ENCODE measurements at regions of chr12 and their contacts with region 1.

Region 1: GRCh38 chr12:126874427-126875026 is 1392.4 kb upstream of the TMEM132C start:
- DNase-seq: peak; percentile 8 to 72 (median 53)
- ATAC-seq: no peak
- H3K4me3 ChIP-seq: no peak overlapping the region
- H3K4me3 Mint-ChIP-seq: no peak overlapping the region
- H3K27ac ChIP-seq: no peak overlapping the region
- H3K27ac Mint-ChIP-seq: no peak overlapping the region
- H3K4me1 ChIP-seq: no peaks in the 10 kb centered on the region
- H3K4me1 Mint-ChIP-seq: no peaks in the 10 kb centered on the region
- H3K27me3 ChIP-seq: no peaks in the 10 kb centered on the region
- H3K27me3 Mint-ChIP-seq: peaks cover 2% of the 10 kb centered on the region
- CTCF ChIP-seq: peak; percentile 57

Region 2: DNA sequence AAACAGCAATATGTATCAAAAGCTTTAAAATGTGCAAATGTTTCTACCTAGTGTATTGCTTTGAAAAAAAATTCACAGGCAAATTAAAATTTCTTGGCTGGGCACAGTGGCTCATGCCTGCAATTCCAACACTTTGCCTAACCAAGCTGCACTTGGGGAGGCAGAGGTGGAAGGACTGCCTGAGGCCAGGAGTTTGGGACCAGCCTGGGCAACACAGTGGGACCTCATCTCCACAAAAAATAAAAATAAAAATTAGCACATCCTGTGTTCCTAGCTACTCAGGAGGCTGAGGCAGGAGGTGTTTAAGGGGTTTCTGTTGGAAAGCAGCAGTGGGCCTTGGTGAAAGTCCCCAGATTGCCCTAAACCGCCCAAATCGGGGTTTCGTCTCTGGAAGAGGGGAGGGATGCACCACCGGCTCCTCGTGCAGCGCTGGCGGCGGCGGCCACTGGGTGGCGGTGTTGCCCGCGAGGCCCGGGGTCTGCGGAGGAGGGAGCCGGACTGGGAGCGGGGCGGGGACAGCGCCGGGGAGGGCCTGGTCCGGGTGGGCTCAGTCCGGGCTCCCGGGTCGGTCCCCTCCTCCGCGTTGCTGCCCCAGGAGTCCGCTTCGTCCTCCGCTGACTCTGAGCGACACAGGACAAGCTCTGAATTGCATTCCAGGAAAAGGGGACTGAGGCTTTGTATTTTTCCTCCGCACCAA is 1543.7 kb before region 1 on chr12:
- CTCF ChIA-PET with region 1: interaction called, 3 read pairs
- POLR2A ChIA-PET with region 1: no interaction called
- intact Hi-C with region 1: loop called in 1 of 2 experiments (anchors 2 kb)
- DNase-seq: peak in 7 of 9 experiments; percentile 23 to 55 (median 25)
- ATAC-seq: no peak
- H3K4me3 ChIP-seq: no peak overlapping the region
- H3K4me3 Mint-ChIP-seq: no peak overlapping the region
- H3K27ac ChIP-seq: no peak overlapping the region
- H3K27ac Mint-ChIP-seq: no peak overlapping the region
- H3K4me1 ChIP-seq: no peaks in the 10 kb centered on the region
- H3K4me1 Mint-ChIP-seq: no peaks in the 10 kb centered on the region
- H3K27me3 ChIP-seq: no peaks in the 10 kb centered on the region
- H3K27me3 Mint-ChIP-seq: peaks cover 52% of the 10 kb centered on the region
- CTCF ChIP-seq: peak; percentile 53

Region 3: DNA sequence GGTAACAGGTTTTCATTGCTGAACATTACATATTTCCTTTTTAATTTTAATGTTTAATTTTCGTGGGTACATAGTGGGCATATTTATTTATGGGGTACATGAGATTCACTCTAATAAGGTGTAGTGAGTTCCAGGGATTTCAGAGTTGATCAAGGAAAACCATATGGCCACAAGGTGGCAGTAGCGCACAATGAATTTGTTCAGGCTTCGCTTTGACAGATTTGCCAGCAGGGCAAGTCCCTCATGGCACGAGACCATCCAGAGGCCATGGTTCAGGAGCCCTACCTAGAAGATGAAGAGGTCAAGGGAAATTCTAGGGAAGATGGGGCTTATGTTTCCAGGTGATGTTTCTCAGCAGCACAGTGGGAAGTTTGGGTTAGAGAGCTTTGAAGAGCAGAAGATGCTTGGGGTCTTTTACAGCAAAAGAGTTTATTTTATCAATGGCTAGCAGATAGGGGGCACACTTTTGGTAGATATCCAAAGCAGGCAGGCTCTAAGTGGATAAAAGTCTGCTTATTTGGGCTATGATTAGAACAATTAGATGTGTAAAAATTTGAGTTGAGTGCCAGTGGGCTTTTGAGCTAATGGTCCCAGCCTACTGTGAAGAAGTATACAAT is 804.9 kb before region 1 on chr12:
- CTCF ChIA-PET with region 1: interaction called, 5 read pairs
- POLR2A ChIA-PET with region 1: no interaction called
- intact Hi-C with region 1: loop called in 1 of 2 experiments (anchors 10 kb)
- DNase-seq: peak in 3 of 9 experiments; percentile 4 to 25 (median 11)
- ATAC-seq: no peak
- H3K4me3 ChIP-seq: no peak overlapping the region
- H3K4me3 Mint-ChIP-seq: no peak overlapping the region
- H3K27ac ChIP-seq: no peak overlapping the region
- H3K27ac Mint-ChIP-seq: no peak overlapping the region
- H3K4me1 ChIP-seq: no peaks in the 10 kb centered on the region
- H3K4me1 Mint-ChIP-seq: no peaks in the 10 kb centered on the region
- H3K27me3 ChIP-seq: no peaks in the 10 kb centered on the region
- H3K27me3 Mint-ChIP-seq: no peaks in the 10 kb centered on the region
- CTCF ChIP-seq: no peak

Region 4: DNA sequence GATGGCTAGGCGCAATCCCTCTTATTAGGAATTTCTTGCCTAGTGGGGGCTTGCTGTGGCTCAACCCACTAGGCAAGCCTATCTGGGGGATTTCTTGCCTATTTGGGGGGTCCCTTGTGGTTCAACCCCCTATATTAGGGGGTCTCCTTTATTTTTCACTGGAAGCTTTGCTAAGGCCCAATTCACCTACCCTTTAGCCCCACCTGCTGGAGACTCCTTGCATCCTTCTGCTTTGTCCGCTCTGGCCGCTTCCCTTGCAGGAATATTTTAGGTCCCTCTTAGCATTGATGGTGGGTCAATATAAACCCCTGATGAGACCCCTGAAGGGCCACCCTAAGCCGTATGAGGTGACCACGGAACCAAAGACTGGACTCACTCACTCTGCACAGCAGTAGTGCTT is 257.2 kb before region 1 on chr12:
- CTCF ChIA-PET with region 1: no interaction called
- POLR2A ChIA-PET with region 1: no interaction called
- intact Hi-C with region 1: no loop called
- DNase-seq: no peak
- ATAC-seq: no peak
- H3K4me3 ChIP-seq: no peak overlapping the region
- H3K4me3 Mint-ChIP-seq: no peak overlapping the region
- H3K27ac ChIP-seq: no peak overlapping the region
- H3K27ac Mint-ChIP-seq: no peak overlapping the region
- H3K4me1 ChIP-seq: no peaks in the 10 kb centered on the region
- H3K4me1 Mint-ChIP-seq: no peaks in the 10 kb centered on the region
- H3K27me3 ChIP-seq: no peaks in the 10 kb centered on the region
- H3K27me3 Mint-ChIP-seq: no peaks in the 10 kb centered on the region
- CTCF ChIP-seq: no peak

Measured in CD8-positive, alpha-beta T cell (primary cell).